HCT116 (cell line): ENCODE measurements at regions of chr1 and their contacts with region 1.

Region 1: DNA sequence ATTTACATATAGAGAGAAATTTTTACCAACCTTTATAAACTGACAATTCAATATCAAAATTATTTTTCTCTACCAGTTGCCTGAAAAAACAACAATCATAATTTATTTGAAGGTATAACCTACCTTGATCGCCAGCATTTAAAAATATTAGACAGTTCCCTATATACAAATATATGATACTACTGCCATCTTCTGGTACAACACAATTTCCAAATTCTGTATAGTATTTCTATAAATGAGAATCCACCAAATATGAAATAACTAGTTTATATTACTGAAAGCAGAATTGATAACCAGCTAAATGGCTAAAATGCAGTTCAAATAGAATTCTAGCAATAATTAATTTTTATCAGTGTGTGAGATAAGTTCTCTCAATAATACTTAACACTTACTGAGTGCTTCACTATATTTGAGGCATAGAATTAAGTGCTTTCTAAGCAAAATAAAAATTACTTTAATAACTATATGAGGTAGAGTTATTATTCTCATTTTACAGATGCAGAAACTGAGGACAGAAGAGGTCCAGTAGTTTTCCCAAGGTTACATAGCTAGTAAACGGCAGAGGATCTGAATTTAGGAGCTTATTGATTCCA is 75.6 kb downstream of the PIGK start:
- DNase-seq: no peak
- ATAC-seq: no peak
- H3K4me3 ChIP-seq: no peak overlapping the region
- H3K27ac ChIP-seq: no peak overlapping the region
- H3K4me1 ChIP-seq: no peaks in the 10 kb centered on the region
- H3K27me3 ChIP-seq: no peaks in the 10 kb centered on the region
- CTCF ChIP-seq: peak in 2 of 3 experiments; percentile 36 to 61; a peak in 3 of 6 replicates
- POLR2A ChIP-seq: no peak
- RAD21 ChIP-seq: peak; percentile 57

Region 2: DNA sequence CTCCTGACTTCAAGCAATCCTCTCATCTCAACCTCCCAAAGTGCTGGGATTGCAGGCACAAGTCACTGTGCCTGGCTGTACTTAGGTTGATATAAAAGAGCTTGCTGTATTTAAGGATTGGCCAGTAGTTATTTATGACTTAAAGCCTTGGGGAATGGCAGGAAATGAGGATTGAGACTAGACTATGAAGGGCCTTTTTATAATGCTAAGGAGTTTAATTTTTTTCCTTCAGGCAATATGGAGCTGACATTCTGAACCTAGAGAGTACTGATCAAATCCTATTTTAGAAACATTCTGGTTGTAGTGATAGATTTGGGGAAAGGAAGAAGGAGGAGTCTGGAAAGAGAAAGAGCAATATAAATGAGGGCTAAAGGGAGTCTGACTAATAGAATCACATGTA is 1302.2 kb before region 1 on chr1:
- CTCF ChIA-PET with region 1: no interaction called
- POLR2A ChIA-PET with region 1: no interaction called
- RAD21 ChIA-PET with region 1: interaction called in 1 of 2 experiments, 5 read pairs
- intact Hi-C with region 1: loop called (anchors 10 kb)
- DNase-seq: no peak
- ATAC-seq: no peak
- H3K4me3 ChIP-seq: no peak overlapping the region
- H3K27ac ChIP-seq: no peak overlapping the region
- H3K4me1 ChIP-seq: no peaks in the 10 kb centered on the region
- H3K27me3 ChIP-seq: no peaks in the 10 kb centered on the region
- CTCF ChIP-seq: no peak
- POLR2A ChIP-seq: no peak
- RAD21 ChIP-seq: no peak

Region 3: DNA sequence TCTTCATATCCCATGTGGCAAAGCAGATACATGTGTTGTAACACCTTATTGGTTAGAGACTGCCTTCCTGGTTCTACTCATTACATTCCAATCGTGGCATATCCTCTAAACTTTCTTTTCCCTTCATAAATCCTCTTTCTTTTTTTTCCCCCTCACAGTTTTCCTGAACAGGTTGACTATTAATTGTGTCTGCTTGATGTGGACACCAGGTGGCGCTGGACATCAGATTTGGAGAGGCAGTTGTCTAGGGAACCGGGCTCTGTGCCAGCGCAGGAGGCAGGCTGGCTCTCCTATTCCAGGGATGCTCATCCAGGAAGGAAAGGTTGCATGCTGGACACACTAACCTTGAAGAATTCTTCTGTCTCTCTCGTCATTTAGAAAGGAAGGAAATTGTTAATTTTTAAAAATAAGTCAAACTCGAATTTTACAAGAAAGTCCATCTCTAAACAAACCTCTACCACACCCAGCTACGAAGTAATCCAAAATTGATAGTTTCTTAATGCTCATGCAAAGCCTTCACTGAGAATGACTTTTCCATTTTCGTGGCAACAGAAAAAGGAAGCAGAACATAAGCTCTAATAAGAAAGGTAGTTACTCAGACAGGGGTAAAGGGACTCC is 1152.0 kb before region 1 on chr1:
- CTCF ChIA-PET with region 1: no interaction called
- POLR2A ChIA-PET with region 1: no interaction called
- RAD21 ChIA-PET with region 1: no interaction called
- intact Hi-C with region 1: loop called (anchors 5 kb)
- DNase-seq: peak; percentile 75
- ATAC-seq: peak; percentile 93
- H3K4me3 ChIP-seq: no peak overlapping the region
- H3K27ac ChIP-seq: no peak overlapping the region
- H3K4me1 ChIP-seq: no peaks in the 10 kb centered on the region
- H3K27me3 ChIP-seq: peaks cover 12% of the 10 kb centered on the region
- CTCF ChIP-seq: peak; percentile 66 to 87 (median 75)
- POLR2A ChIP-seq: no peak
- RAD21 ChIP-seq: peak; percentile 83

Region 4: GRCh38 chr1:77219166-77219887 is 75.7 kb after region 1 on chr1 and contains the start of gene PIGK:
- CTCF ChIA-PET with region 1: no interaction called
- POLR2A ChIA-PET with region 1: no interaction called
- RAD21 ChIA-PET with region 1: no interaction called
- intact Hi-C with region 1: no loop called
- DNase-seq: peak; percentile 83
- ATAC-seq: peak; percentile 96
- H3K4me3 ChIP-seq: peak within 1 kb of the TSS; percentile 76 to 97
- H3K27ac ChIP-seq: peak within 1 kb of the TSS; percentile 46
- H3K4me1 ChIP-seq: peaks cover 2 to 9% of the 10 kb centered on the region in 2 experiments; a peak in 2 of 4 replicates
- H3K27me3 ChIP-seq: no peaks in the 10 kb centered on the region
- CTCF ChIP-seq: no peak
- POLR2A ChIP-seq: peak; percentile 85
- RAD21 ChIP-seq: no peak
- total RNA-seq, gene PIGK: 23.3 TPM

Region 5: DNA sequence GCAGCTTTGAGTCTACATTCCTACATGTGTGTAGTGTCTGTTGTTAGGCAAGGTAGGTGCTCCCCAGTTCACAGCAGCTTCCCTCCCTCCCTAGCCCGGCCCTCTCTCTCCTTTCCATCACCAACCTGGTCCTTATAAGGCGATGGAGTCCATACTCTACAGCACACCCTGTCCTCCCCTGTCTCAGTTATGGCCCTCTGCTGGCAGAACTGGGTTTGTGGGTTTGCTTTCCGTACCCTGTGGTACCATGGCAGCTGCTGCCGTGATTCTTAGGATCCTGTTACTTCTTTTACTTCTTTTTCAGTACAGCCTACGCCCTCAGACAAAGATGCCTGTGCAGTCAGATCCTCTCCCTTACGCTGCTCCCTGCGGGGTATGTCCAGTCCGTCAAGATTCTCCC is 169.9 kb after region 1 on chr1:
- CTCF ChIA-PET with region 1: no interaction called
- POLR2A ChIA-PET with region 1: no interaction called
- RAD21 ChIA-PET with region 1: no interaction called
- intact Hi-C with region 1: loop called (anchors 1 kb)
- DNase-seq: peak; percentile 33
- ATAC-seq: peak; percentile 100
- H3K4me3 ChIP-seq: no peak overlapping the region
- H3K27ac ChIP-seq: no peak overlapping the region
- H3K4me1 ChIP-seq: peaks cover 0 to 6% of the 10 kb centered on the region in 2 experiments; a peak in 1 of 4 replicates
- H3K27me3 ChIP-seq: no peaks in the 10 kb centered on the region
- CTCF ChIP-seq: peak in 2 of 3 experiments; percentile 61 to 70; a peak in 4 of 6 replicates
- POLR2A ChIP-seq: no peak
- RAD21 ChIP-seq: no peak

Region 6: GRCh38 chr1:77533660-77534305 is 390.2 kb after region 1 on chr1:
- CTCF ChIA-PET with region 1: interaction called, 3 read pairs
- POLR2A ChIA-PET with region 1: no interaction called
- RAD21 ChIA-PET with region 1: no interaction called
- intact Hi-C with region 1: loop called (anchors 1 kb)
- DNase-seq: peak; percentile 43
- ATAC-seq: peak; percentile 33; the same call in 1 of the 2 replicates
- H3K4me3 ChIP-seq: no peak overlapping the region
- H3K27ac ChIP-seq: no peak overlapping the region
- H3K4me1 ChIP-seq: peaks cover 17 to 50% of the 10 kb centered on the region in 2 experiments
- H3K27me3 ChIP-seq: no peaks in the 10 kb centered on the region
- CTCF ChIP-seq: peak; percentile 62 to 83 (median 70); a peak in 5 of 6 replicates
- POLR2A ChIP-seq: no peak
- RAD21 ChIP-seq: peak; percentile 73

Region 7: DNA sequence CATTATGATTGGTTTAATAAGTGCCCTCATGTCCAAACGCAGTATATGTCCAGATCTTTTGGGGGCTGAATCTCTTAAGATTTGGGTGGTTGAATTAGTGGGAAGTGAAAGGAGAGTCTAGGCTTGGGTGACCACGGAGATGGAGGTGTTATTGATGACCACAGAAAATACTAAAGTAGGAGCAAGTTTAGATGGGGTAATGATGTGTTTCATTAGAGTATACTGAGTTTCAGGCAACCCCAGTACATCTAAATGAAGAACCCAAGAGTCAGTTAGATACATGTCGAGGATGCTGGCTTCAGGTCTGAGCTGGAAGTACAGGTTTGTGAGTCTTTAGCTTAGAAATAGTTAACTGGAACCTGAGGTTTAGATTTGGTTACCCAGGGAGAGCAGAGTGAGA is 545.3 kb after region 1 on chr1:
- CTCF ChIA-PET with region 1: no interaction called
- POLR2A ChIA-PET with region 1: no interaction called
- RAD21 ChIA-PET with region 1: no interaction called
- intact Hi-C with region 1: no loop called
- DNase-seq: no peak
- ATAC-seq: no peak
- H3K4me3 ChIP-seq: no peak overlapping the region
- H3K27ac ChIP-seq: no peak overlapping the region
- H3K4me1 ChIP-seq: peaks cover 6 to 19% of the 10 kb centered on the region in 2 experiments; a peak in 3 of 4 replicates
- H3K27me3 ChIP-seq: no peaks in the 10 kb centered on the region
- CTCF ChIP-seq: no peak
- POLR2A ChIP-seq: no peak
- RAD21 ChIP-seq: no peak

Region 8: GRCh38 chr1:77900687-77901293 is 757.2 kb after region 1 on chr1:
- CTCF ChIA-PET with region 1: no interaction called
- POLR2A ChIA-PET with region 1: no interaction called
- RAD21 ChIA-PET with region 1: no interaction called
- intact Hi-C with region 1: loop called (anchors 1 kb)
- DNase-seq: peak; percentile 53
- ATAC-seq: peak; percentile 90
- H3K4me3 ChIP-seq: no peak overlapping the region
- H3K27ac ChIP-seq: no peak overlapping the region
- H3K4me1 ChIP-seq: no peaks in the 10 kb centered on the region
- H3K27me3 ChIP-seq: no peaks in the 10 kb centered on the region
- CTCF ChIP-seq: peak; percentile 56 to 84 (median 73); a peak in 5 of 6 replicates
- POLR2A ChIP-seq: no peak
- RAD21 ChIP-seq: peak; percentile 82